Calu3 (cell line): ENCODE measurements at regions of chr11 and their contacts with region 1.

Region 1: DNA sequence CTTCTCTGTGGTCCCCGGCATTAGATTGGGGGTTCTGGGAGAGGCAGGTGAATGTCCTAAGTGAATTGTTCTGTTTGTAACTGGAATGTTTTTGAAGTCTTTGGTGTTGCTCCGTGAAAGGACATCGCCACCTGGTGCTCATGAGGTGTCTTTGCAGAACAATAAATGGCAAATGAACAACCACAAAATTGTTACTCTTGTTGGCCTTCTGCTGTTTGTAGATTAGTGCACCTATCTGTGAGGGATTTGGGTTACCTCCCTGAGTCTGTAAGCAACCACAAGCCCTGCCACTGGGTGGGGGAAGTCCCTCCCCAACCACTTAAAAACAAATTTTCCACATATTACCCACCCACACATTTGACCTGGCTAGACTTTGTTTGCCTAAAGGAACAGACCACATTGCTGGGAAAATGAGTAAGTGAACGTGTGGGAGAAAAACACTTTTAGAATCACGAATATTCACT is 4.7 kb downstream of the MPEG1 start:
- DNase-seq: peak; percentile 34
- H3K4me3 Mint-ChIP-seq: no peak overlapping the region
- H3K27ac Mint-ChIP-seq: peak overlapping the region; percentile 58
- H3K4me1 Mint-ChIP-seq: peaks cover 6% of the 10 kb centered on the region
- H3K27me3 Mint-ChIP-seq: no peaks in the 10 kb centered on the region
- CTCF ChIP-seq: peak; percentile 76

Region 2: GRCh38 chr11:59171508-59172322 is 36.3 kb before region 1 on chr11 and contains the start of gene DTX4:
- CTCF ChIA-PET with region 1: interaction called, 16 read pairs
- intact Hi-C with region 1: loop called (anchors 1 kb)
- DNase-seq: peak; percentile 96
- H3K4me3 Mint-ChIP-seq: no peak within 1 kb of the TSS
- H3K27ac Mint-ChIP-seq: peak within 1 kb of the TSS; percentile 82
- H3K4me1 Mint-ChIP-seq: peaks cover 24% of the 10 kb centered on the region
- H3K27me3 Mint-ChIP-seq: no peaks in the 10 kb centered on the region
- CTCF ChIP-seq: peak; percentile 78
- total RNA-seq, gene DTX4: 56.7 and 65.8 TPM in 2 replicates

Region 3: DNA sequence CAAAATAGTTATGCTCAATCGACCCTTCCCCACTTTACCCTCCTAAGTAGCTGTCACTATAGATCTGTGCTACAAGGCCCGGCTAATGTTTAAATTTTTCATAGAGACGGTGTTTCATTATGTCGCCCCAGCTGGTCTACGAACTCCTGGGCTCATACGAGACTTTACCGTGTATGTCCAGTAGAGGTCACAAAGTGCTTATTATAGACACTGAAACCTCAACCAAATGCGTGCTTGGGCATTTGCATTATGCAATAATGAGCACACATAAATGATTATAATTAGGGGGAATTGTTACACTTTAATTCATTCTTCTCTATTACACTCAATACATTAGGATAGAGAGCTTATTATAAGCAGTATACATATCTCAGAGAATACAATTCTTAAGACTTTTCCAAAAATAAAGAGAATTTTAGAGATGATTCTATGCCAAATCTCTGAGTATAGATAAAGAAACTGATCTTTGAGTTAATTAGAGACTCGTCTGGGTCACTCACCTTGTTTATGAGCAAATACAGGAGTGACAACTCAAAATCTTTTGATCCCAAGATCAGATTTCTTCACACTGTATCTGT is 615.1 kb after region 1 on chr11:
- CTCF ChIA-PET with region 1: no interaction called
- intact Hi-C with region 1: no loop called
- DNase-seq: peak; percentile 57
- H3K4me3 Mint-ChIP-seq: peak overlapping the region; percentile 1
- H3K27ac Mint-ChIP-seq: peak overlapping the region; percentile 12
- H3K4me1 Mint-ChIP-seq: peaks cover 9% of the 10 kb centered on the region
- H3K27me3 Mint-ChIP-seq: no peaks in the 10 kb centered on the region
- CTCF ChIP-seq: peak; percentile 42